CD14-positive monocyte (primary cell): ENCODE measurements at regions of chr11 and their contacts with region 1.

Region 1: GRCh38 chr11:121318848-121319834 is 26.6 kb downstream of the SC5D start:
- DNase-seq: peak; percentile 61 to 71 (median 68)
- H3K4me3 ChIP-seq: no peak overlapping the region
- H3K4me3 Mint-ChIP-seq: no peak overlapping the region
- H3K27ac ChIP-seq: no peak overlapping the region
- H3K27ac Mint-ChIP-seq: no peak overlapping the region
- H3K4me1 ChIP-seq: no peaks in the 10 kb centered on the region
- H3K4me1 Mint-ChIP-seq: peaks cover 15% of the 10 kb centered on the region
- H3K27me3 ChIP-seq: no peaks in the 10 kb centered on the region
- H3K27me3 Mint-ChIP-seq: no peaks in the 10 kb centered on the region
- CTCF ChIP-seq: peak; percentile 87

Region 2: GRCh38 chr11:121358760-121359159 is 39.6 kb after region 1 on chr11:
- intact Hi-C with region 1: no loop called
- DNase-seq: peak; percentile 12 to 42 (median 21)
- H3K4me3 ChIP-seq: no peak overlapping the region
- H3K4me3 Mint-ChIP-seq: no peak overlapping the region
- H3K27ac ChIP-seq: peak overlapping the region in 1 of 2 donors; percentile 53
- H3K27ac Mint-ChIP-seq: peak overlapping the region in 6 of 7 donors; percentile 5 to 75 (median 51)
- H3K4me1 ChIP-seq: peaks cover 15 to 19% of the 10 kb centered on the region in 2 donors
- H3K4me1 Mint-ChIP-seq: peaks cover 25% of the 10 kb centered on the region
- H3K27me3 ChIP-seq: no peaks in the 10 kb centered on the region
- H3K27me3 Mint-ChIP-seq: no peaks in the 10 kb centered on the region
- CTCF ChIP-seq: no peak

Region 3: DNA sequence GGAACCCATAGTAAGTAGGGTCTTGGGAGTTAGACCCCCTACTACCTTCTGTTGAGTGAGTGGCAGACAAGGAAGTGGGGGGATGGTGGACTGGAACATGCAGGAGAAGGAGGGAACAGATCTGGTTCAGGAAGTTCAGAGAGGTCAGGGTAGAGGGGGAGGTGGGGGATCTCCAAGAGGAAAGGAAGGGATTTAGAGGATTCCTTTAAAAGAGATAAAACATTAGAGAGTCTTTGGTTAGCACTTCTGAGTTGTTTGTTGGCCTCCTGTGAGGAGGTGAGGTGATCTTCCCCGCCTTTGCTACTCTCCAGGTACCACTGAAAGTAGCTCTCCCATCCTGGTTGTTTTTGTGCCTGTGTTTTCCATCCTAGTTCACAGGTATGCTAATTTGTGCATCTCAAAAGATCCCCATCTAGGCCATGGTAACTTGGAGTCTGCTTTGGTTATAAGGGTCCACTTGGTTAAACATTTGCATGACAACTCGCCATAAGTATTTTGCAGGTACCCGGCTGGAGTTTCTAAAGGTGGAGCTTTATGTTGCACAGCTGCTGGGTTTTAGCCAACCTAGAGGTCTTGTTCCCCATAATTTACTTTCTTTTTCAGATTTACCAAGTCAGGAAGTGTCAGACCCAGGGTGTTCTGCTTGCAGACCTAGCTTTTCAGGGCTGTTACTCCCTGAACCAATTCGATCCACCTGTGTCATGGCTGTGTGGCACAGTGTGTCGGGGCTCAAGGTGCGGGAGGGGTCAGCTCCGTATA is 53.7 kb after region 1 on chr11:
- intact Hi-C with region 1: loop called in 1 of 2 experiments (anchors 10 kb)
- DNase-seq: peak in 1 of 3 donors; percentile 26
- H3K4me3 ChIP-seq: no peak overlapping the region
- H3K4me3 Mint-ChIP-seq: no peak overlapping the region
- H3K27ac ChIP-seq: peak overlapping the region in 1 of 2 donors; percentile 21
- H3K27ac Mint-ChIP-seq: peak overlapping the region in 3 of 7 donors; percentile 68 to 73 (median 72)
- H3K4me1 ChIP-seq: peaks cover 49 to 52% of the 10 kb centered on the region in 2 donors
- H3K4me1 Mint-ChIP-seq: peaks cover 74% of the 10 kb centered on the region
- H3K27me3 ChIP-seq: no peaks in the 10 kb centered on the region
- H3K27me3 Mint-ChIP-seq: no peaks in the 10 kb centered on the region
- CTCF ChIP-seq: no peak

Region 4: DNA sequence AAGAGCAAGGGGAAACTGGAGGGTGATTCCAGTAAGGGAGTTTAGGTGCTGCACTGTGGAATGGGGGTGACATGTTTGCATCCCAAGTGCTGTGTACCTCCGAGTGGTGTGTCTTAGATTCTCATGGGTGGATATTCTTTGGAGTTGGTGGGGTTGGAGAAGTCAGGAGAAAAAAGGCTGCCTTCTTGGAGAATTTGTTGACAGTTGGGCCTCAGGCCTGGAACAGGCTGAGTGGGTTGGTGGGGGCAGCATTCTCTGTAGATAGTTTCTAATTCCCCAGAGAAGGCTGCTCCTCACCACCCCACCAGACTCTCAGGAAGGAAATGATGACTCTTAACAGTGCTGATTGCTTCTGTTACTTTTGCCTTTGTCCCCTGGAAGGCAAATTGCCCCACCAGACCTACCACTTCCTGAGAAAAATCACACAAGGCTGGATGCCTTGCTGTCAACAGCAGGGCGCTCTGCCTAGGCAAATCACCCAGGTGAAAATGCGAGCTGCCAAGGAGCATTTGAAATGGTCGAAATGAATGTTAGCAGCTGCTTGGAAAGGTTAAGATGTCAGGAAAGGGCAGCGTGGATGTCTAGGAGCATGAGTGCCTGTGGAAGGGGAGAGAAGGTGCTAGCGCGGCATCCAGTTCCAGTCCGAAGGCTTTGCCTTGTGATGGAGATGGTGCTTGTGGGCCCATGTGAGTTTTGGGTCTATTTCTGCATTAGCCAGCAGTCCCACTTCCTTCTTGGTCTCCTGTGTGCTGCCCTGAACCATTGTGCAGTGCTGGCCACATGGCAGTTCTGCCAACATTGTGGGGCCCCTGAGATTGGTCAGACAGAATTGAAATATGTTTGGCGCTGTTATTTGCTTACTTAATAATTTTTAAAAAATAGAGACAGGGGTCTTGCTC is 163.3 kb after region 1 on chr11:
- intact Hi-C with region 1: loop called in 1 of 2 experiments (anchors 10 kb)
- DNase-seq: peak; percentile 35 to 65 (median 52)
- H3K4me3 ChIP-seq: peak overlapping the region in 1 of 3 experiments; percentile 34
- H3K4me3 Mint-ChIP-seq: peak overlapping the region; percentile 17 to 83
- H3K27ac ChIP-seq: peak overlapping the region; percentile 58 to 79
- H3K27ac Mint-ChIP-seq: peak overlapping the region; percentile 46 to 93 (median 86)
- H3K4me1 ChIP-seq: peaks cover 49 to 55% of the 10 kb centered on the region in 2 donors
- H3K4me1 Mint-ChIP-seq: peaks cover 58% of the 10 kb centered on the region
- H3K27me3 ChIP-seq: no peaks in the 10 kb centered on the region
- H3K27me3 Mint-ChIP-seq: no peaks in the 10 kb centered on the region
- CTCF ChIP-seq: no peak